Ascending aorta (tissue), 2 donors: ENCODE measurements at regions of chr18 and their contacts with region 1.

Region 1: GRCh38 chr18:36284671-36285295 is 12.7 kb upstream of the FHOD3 start:
- DNase-seq: peak in 1 of 2 donors; percentile 71
- H3K4me3 ChIP-seq: no peak overlapping the region
- H3K27ac ChIP-seq: no peak overlapping the region
- H3K4me1 ChIP-seq: no peaks in the 10 kb centered on the region
- H3K27me3 ChIP-seq: no peaks in the 10 kb centered on the region
- CTCF ChIP-seq: peak; percentile 86 to 91 (median 89)

Region 2: GRCh38 chr18:35756506-35757117 is 528.2 kb before region 1 on chr18:
- intact Hi-C with region 1: loop called (anchors 5 kb)
- DNase-seq: no peak
- H3K4me3 ChIP-seq: no peak overlapping the region
- H3K27ac ChIP-seq: no peak overlapping the region
- H3K4me1 ChIP-seq: no peaks in the 10 kb centered on the region
- H3K27me3 ChIP-seq: no peaks in the 10 kb centered on the region
- CTCF ChIP-seq: peak; percentile 53 to 77 (median 60)

Region 3: DNA sequence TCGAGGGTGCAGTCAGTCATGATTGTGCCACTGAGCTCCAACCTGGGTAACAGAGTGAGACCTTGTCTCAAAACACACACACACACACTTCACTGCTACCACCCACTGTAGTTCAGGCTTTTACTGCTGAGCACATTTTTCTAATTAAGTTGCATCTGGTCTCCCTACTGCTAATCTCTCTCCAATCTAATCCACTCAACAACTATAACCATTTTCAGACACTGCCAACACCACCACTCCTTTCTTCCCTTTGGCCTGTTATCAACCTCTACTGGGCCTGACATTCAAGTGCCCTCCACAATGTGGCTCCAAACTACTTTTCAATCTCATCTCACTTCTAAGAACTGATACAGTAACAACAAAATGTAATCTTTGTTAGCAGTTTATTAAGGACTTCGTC is 267.6 kb before region 1 on chr18:
- intact Hi-C with region 1: loop called (anchors 1 kb)
- DNase-seq: no peak
- H3K4me3 ChIP-seq: no peak overlapping the region
- H3K27ac ChIP-seq: no peak overlapping the region
- H3K4me1 ChIP-seq: no peaks in the 10 kb centered on the region
- H3K27me3 ChIP-seq: no peaks in the 10 kb centered on the region
- CTCF ChIP-seq: no peak

Region 4: DNA sequence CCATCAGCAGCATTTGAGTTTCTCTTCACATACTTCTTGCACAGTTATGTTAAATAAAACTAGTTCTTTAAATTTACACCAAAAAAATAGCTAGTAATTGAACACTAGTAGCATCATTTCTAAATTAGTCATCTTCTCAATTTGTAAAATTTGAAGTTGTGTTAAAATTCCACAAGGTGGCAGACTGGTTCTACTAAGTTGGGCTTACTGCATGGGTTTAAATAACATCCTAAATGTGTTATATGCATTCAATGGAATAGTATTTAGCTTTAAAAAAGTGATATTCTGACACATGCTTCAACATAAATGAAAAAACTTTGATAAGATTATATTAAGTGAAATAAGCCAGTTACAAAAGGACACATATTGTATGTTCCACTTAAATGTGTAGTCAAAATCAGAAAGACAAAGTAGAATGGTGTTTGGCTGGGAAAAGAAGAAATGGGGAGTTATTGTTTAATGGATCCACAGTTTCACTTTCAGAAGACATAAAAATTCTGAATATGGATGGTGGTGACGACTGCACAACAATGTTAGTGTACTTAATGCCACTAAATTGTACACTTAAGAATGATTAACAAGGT is 188.8 kb before region 1 on chr18:
- intact Hi-C with region 1: loop called (anchors 1 kb)
- DNase-seq: no peak
- H3K4me3 ChIP-seq: no peak overlapping the region
- H3K27ac ChIP-seq: no peak overlapping the region
- H3K4me1 ChIP-seq: no peaks in the 10 kb centered on the region
- H3K27me3 ChIP-seq: no peaks in the 10 kb centered on the region
- CTCF ChIP-seq: peak in 2 of 3 experiments; percentile 33 to 54

Region 5: DNA sequence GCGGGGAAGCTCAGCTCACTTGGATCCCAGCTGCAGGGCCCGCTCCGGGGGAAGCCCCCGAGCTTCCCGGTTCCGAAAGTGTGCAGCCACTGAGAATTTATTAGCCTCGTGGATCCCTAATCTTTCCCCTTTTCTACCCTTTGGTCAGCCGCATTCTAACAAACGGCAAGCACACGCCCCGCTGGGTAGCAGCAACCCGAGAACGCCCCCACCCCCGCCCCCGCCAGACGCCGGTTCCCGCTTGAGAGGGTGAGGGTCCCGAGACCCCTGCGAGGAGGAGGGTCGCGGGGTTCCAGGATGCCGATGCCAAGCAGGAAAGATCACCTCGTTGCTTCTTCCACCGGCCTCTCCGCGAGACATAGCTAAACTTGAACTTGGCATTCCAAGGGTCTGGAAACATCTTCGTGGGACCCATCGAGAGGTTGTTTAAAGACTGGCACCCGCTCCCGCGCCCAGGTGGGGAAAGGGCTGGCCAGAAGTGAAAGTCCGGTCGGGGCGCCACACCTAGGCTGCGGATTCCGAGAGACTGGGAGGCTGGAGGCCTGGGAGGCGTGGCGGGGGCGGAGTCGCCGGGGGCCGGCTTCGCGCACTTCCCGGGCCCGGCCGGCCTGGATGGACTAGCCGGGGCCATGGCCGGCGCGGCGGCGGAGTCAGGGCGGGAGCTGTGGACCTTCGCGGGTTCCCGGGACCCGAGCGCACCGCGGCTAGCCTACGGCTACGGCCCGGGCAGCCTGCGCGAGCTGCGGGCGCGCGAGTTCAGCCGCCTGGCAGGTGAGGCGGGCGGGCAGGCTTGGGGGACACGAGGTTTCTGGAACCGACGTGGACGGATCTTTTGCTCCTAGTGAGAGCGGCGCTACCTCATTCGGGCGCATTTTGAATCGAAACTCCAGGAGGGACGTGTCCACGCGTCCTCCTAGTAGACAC is 97.6 kb before region 1 on chr18 and contains the start of gene MOCOS:
- intact Hi-C with region 1: loop called (anchors 5 kb)
- DNase-seq: peak; percentile 38 to 86
- H3K4me3 ChIP-seq: peak within 1 kb of the TSS; percentile 64 to 84
- H3K27ac ChIP-seq: peak within 1 kb of the TSS in 1 of 2 donors; percentile 50
- H3K4me1 ChIP-seq: peaks cover 0 to 11% of the 10 kb centered on the region in 2 donors
- H3K27me3 ChIP-seq: no peaks in the 10 kb centered on the region
- CTCF ChIP-seq: no peak
- total RNA-seq, gene MOCOS: 0.21 TPM

Region 6: DNA sequence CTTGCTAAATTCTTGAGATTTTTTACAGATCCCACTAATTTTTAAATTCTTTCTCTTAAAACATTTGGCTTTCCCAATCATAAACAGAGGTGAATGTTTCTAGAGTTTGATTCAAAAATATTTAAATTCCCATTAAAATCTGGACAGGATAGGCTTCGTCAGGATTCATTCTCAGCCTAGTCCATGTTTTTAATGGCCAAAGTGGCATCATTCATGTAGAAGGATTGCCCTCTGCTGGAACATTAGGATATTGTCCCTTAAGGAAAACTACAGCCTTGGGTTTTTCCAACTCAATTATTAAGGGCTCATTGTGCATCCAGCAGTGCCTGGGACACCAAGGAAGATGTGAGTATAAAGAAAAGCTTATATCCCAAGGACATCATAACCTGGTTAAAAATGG is 472.3 kb after region 1 on chr18:
- intact Hi-C with region 1: loop called (anchors 5 kb)
- DNase-seq: no peak
- H3K4me3 ChIP-seq: no peak overlapping the region
- H3K27ac ChIP-seq: peak overlapping the region in 1 of 2 donors; percentile 19
- H3K4me1 ChIP-seq: peaks cover 0 to 4% of the 10 kb centered on the region in 2 donors
- H3K27me3 ChIP-seq: no peaks in the 10 kb centered on the region
- CTCF ChIP-seq: peak; percentile 58 to 63 (median 62)